Posterior vena cava (tissue), 2 donors: ENCODE measurements at regions of chr11 and their contacts with region 1.

Region 1: GRCh38 chr11:75241036-75241905 is 697 bp downstream of the TPBGL start:
- DNase-seq: peak; percentile 96

Region 2: GRCh38 chr11:74929431-74930363 is 311.6 kb before region 1 on chr11:
- intact Hi-C with region 1: loop called (anchors 10 kb)
- DNase-seq: no peak

Region 3: GRCh38 chr11:75170521-75171216 is 70.6 kb before region 1 on chr11:
- intact Hi-C with region 1: no loop called
- DNase-seq: peak; percentile 69